ENCODE measurements at regions of chr11 and their contacts with region 1.

Region 1: DNA sequence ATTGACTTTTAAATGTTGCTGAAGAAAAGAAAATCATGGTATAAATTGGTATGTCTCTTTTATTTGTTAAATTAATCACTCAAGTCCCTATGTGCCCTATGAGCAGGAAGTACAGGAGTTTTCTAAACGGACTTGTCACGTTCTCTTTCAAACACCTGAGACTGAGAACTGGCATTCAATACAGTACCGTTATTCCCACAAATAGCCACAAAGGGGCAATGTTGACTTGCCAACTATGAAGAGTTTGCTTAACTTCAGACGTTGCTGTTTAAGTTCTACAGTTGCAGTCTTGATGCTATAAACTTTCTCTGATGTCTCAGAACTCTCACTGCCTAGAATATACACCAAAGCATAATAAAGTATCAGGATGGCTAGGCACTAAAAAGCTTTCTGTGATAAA is 7.6 kb downstream of the OR56A1 start:
- DNase-seq: peak in 1 of 5 donors; percentile 20
- ATAC-seq: peak in 3 of 4 donors; percentile 62 to 82 (median 81)
- H3K4me3 ChIP-seq: no peak overlapping the region
- H3K27ac ChIP-seq: no peak overlapping the region
- H3K4me1 ChIP-seq: no peaks in the 10 kb centered on the region
- H3K27me3 ChIP-seq: no peaks in the 10 kb centered on the region
- CTCF ChIP-seq: peak; percentile 40 to 77 (median 64)
- POLR2A ChIP-seq: no peak

Region 2: GRCh38 chr11:5541427-5541826 is 481.5 kb before region 1 on chr11:
- intact Hi-C with region 1: no loop called
- DNase-seq: no peak
- ATAC-seq: no peak
- H3K4me3 ChIP-seq: no peak overlapping the region
- H3K27ac ChIP-seq: no peak overlapping the region
- H3K4me1 ChIP-seq: no peaks in the 10 kb centered on the region
- H3K27me3 ChIP-seq: no peaks in the 10 kb centered on the region
- CTCF ChIP-seq: no peak
- POLR2A ChIP-seq: no peak

Region 3: DNA sequence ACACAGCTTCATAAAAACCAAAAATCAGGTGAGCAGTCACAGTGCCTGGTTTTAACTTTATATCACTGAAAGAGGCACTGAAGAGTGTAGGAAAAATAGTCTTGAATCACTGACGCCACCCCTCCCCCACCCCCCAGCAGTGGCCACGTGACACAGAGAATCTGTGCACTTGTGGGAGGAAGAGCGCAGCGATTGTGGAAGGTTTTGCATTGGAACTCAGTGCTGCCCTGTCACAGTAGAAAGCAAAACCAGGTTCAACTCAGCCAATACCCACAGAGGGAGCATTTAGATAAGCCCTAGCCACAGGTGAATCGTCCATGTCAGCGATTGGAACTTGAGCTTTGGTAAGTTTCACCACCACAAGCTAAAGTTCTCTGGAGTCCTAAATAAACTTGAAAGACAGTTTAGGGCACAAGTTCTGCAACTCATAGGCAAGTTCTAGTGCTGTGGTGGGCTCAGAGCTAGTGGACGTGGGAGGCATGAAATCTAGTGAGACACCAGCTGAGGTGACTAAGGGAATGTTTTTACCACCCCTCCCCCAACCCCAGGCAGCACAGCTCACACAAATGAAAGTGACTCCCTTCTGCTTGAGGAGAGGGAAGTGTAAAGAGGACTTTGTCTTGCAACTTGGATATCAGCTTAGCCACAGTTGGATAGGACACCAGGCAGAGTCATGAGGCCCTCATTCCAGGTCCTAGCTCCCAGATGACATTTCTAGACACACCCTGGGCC is 133.8 kb after region 1 on chr11:
- intact Hi-C with region 1: loop called in 1 of 10 experiments (anchors 10 kb)
- DNase-seq: no peak
- ATAC-seq: no peak
- H3K4me3 ChIP-seq: no peak overlapping the region
- H3K27ac ChIP-seq: no peak overlapping the region
- H3K4me1 ChIP-seq: no peaks in the 10 kb centered on the region
- H3K27me3 ChIP-seq: no peaks in the 10 kb centered on the region
- CTCF ChIP-seq: no peak
- POLR2A ChIP-seq: no peak

Region 4: GRCh38 chr11:6285019-6285418 is 262.1 kb after region 1 on chr11:
- intact Hi-C with region 1: no loop called
- DNase-seq: peak in 4 of 5 donors; percentile 50 to 59 (median 54)
- ATAC-seq: peak; percentile 81 to 89 (median 87)
- H3K4me3 ChIP-seq: no peak overlapping the region
- H3K27ac ChIP-seq: no peak overlapping the region
- H3K4me1 ChIP-seq: no peaks in the 10 kb centered on the region
- H3K27me3 ChIP-seq: peaks cover 0 to 7% (median 0%) of the 10 kb centered on the region in 9 donors
- CTCF ChIP-seq: no peak
- POLR2A ChIP-seq: no peak

Region 5: DNA sequence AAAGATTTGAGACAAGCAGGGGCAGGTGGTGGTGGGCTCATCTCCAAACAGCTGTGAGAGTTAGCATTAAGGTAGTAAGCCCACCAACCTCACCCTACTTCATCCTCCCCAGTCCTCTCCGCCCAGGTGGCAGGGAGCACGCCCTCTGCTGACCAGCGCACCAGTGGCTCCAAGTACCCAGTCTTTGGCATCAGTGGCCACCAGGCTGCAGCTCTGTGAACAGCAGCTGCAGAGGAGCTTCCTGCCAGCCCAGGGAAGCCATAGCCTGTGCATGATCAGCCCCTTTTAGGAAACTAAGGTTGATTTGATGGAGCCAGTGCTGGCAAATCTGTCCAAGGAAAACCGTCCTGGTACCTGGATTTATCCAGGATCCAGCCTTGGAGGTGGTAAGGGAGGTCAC is 275.6 kb after region 1 on chr11:
- intact Hi-C with region 1: loop called in 2 of 10 experiments (anchors 5 kb)
- DNase-seq: peak in 4 of 5 donors; percentile 35 to 69 (median 48)
- ATAC-seq: peak; percentile 75 to 93 (median 90)
- H3K4me3 ChIP-seq: no peak overlapping the region
- H3K27ac ChIP-seq: no peak overlapping the region
- H3K4me1 ChIP-seq: no peaks in the 10 kb centered on the region
- H3K27me3 ChIP-seq: no peaks in the 10 kb centered on the region
- CTCF ChIP-seq: peak; percentile 32 to 73 (median 56)
- POLR2A ChIP-seq: no peak

Region 6: GRCh38 chr11:6315811-6316425 is 293.0 kb after region 1 on chr11:
- intact Hi-C with region 1: loop called in 8 of 10 experiments (anchors 2 to 10 kb)
- DNase-seq: peak; percentile 54 to 74 (median 59)
- ATAC-seq: peak in 3 of 4 donors; percentile 11 to 30 (median 18)
- H3K4me3 ChIP-seq: peak overlapping the region in 7 of 12 donors; percentile 6 to 42 (median 24)
- H3K27ac ChIP-seq: peak overlapping the region in 3 of 12 donors; percentile 14 to 52 (median 27)
- H3K4me1 ChIP-seq: peaks cover 0 to 42% (median 26%) of the 10 kb centered on the region in 12 donors
- H3K27me3 ChIP-seq: peaks cover 0 to 8% (median 0%) of the 10 kb centered on the region in 9 donors
- CTCF ChIP-seq: peak; percentile 75 to 92 (median 84)
- POLR2A ChIP-seq: no peak

Region 7: DNA sequence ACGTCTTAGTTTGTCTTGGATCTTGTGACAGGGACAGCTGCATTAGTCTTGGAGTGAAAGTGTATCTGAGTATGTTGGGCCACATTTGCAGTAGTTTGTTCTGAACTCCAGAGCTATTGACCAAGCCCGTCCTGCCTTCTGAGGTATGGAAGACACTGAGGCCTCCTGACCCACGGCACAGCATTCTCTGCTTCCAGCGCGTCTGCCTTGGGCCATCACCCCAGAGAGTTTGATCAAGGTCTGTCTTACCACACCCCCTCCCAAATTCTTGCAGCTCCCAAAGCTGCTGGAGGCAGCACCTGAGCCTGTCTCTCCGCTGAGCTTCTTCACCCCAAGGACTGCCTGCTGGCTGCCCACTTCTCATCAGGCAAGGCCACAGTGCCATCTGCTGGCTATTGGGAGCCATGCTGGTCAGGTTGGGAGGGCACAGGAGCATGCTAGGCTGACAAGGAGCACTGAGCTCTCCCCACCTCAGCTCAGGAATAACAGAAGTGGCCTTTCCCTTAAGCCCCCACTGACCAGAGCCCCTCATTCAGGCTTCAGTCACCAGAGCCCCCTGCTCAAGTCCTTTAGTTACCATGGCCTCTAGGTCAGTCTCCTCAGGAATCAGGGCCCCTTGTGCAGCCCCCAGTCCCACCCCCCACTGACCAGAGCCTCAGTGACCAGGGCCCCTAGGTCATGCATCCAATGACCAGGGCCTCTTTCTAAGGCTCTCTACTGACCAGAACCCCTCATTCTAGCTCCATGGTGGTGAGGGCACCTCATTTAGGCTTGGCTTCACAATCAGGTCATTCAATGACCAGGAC is 340.1 kb after region 1 on chr11:
- intact Hi-C with region 1: loop called in 4 of 10 experiments (anchors 2 to 5 kb)
- DNase-seq: peak; percentile 79 to 90 (median 87)
- ATAC-seq: peak; percentile 89 to 92 (median 92)
- H3K4me3 ChIP-seq: peak overlapping the region in 4 of 12 donors; percentile 18 to 31 (median 24)
- H3K27ac ChIP-seq: peak overlapping the region; percentile 66 to 97 (median 78)
- H3K4me1 ChIP-seq: peaks cover 0 to 16% (median 0%) of the 10 kb centered on the region in 12 donors
- H3K27me3 ChIP-seq: no peaks in the 10 kb centered on the region
- CTCF ChIP-seq: peak; percentile 78 to 92 (median 88)
- POLR2A ChIP-seq: no peak

Measured in heart left ventricle (tissue), 16 donors.